CD8-positive, alpha-beta T cell (primary cell): ENCODE measurements at regions of chr18 and their contacts with region 1.

Region 1: GRCh38 chr18:40897884-40898283 is 1057.2 kb upstream of the PIK3C3 start:
- DNase-seq: no peak
- ATAC-seq: no peak
- H3K4me3 ChIP-seq: no peak overlapping the region
- H3K4me3 Mint-ChIP-seq: no peak overlapping the region
- H3K27ac ChIP-seq: no peak overlapping the region
- H3K27ac Mint-ChIP-seq: no peak overlapping the region
- H3K4me1 ChIP-seq: no peaks in the 10 kb centered on the region
- H3K4me1 Mint-ChIP-seq: no peaks in the 10 kb centered on the region
- H3K27me3 ChIP-seq: no peaks in the 10 kb centered on the region
- H3K27me3 Mint-ChIP-seq: no peaks in the 10 kb centered on the region
- CTCF ChIP-seq: no peak

Region 2: DNA sequence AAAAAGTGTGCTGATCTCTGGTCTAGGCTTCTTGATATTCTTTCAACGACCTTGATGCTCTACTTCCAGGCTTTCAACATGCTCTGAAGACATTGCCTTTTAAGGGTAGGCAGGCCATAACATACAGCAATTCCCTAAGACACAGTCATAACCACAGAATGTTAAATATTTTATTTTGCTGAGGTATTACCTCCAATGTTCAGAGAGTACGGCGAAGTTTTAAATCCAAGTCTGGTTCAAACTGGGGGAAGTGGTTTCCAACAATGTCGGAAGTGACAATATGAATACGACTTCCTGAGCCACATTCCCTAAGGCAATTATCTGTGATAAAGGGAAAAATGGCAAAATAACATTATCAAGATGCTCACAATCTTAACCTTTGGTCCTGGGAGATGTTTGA is 20.8 kb before region 1 on chr18:
- CTCF ChIA-PET with region 1: no interaction called
- POLR2A ChIA-PET with region 1: no interaction called
- intact Hi-C with region 1: no loop called
- DNase-seq: no peak
- ATAC-seq: no peak
- H3K4me3 ChIP-seq: no peak overlapping the region
- H3K4me3 Mint-ChIP-seq: no peak overlapping the region
- H3K27ac ChIP-seq: no peak overlapping the region
- H3K27ac Mint-ChIP-seq: no peak overlapping the region
- H3K4me1 ChIP-seq: no peaks in the 10 kb centered on the region
- H3K4me1 Mint-ChIP-seq: no peaks in the 10 kb centered on the region
- H3K27me3 ChIP-seq: no peaks in the 10 kb centered on the region
- H3K27me3 Mint-ChIP-seq: no peaks in the 10 kb centered on the region
- CTCF ChIP-seq: no peak

Region 3: GRCh38 chr18:41347057-41347456 is 449.2 kb after region 1 on chr18:
- CTCF ChIA-PET with region 1: no interaction called
- POLR2A ChIA-PET with region 1: no interaction called
- intact Hi-C with region 1: loop called in 1 of 2 experiments (anchors 10 kb)
- DNase-seq: no peak
- ATAC-seq: no peak
- H3K4me3 ChIP-seq: no peak overlapping the region
- H3K4me3 Mint-ChIP-seq: no peak overlapping the region
- H3K27ac ChIP-seq: no peak overlapping the region
- H3K27ac Mint-ChIP-seq: no peak overlapping the region
- H3K4me1 ChIP-seq: no peaks in the 10 kb centered on the region
- H3K4me1 Mint-ChIP-seq: no peaks in the 10 kb centered on the region
- H3K27me3 ChIP-seq: no peaks in the 10 kb centered on the region
- H3K27me3 Mint-ChIP-seq: no peaks in the 10 kb centered on the region
- CTCF ChIP-seq: no peak